B cell (primary cell): ENCODE measurements at regions of chr12 and their contacts with region 1.

Region 1: GRCh38 chr12:106357549-106358395 is at the start of gene POLR3B:
- DNase-seq: peak; percentile 98
- ATAC-seq: peak; percentile 90
- H3K4me3 ChIP-seq: peak within 1 kb of the TSS; percentile 59 to 93 (median 85)
- H3K4me3 Mint-ChIP-seq: peak within 1 kb of the TSS; percentile 98
- H3K27ac ChIP-seq: peak within 1 kb of the TSS; percentile 67 to 80
- H3K27ac Mint-ChIP-seq: peak within 1 kb of the TSS; percentile 97
- H3K4me1 ChIP-seq: peaks cover 11 to 12% of the 10 kb centered on the region in 2 donors
- H3K4me1 Mint-ChIP-seq: peaks cover 16% of the 10 kb centered on the region
- H3K27me3 ChIP-seq: no peaks in the 10 kb centered on the region
- H3K27me3 Mint-ChIP-seq: peaks cover 2% of the 10 kb centered on the region
- CTCF ChIP-seq: peak; percentile 84
- total RNA-seq, gene POLR3B: 5.9 and 9.7 TPM in 2 replicates

Region 2: GRCh38 chr12:106247674-106248311 is 110.0 kb before region 1 on chr12 and contains the start of gene CKAP4:
- CTCF ChIA-PET with region 1: interaction called, 8 read pairs
- POLR2A ChIA-PET with region 1: interaction called, 3 read pairs
- intact Hi-C with region 1: loop called (anchors 1 kb)
- DNase-seq: peak; percentile 80
- ATAC-seq: peak; percentile 61
- H3K4me3 ChIP-seq: peak within 1 kb of the TSS; percentile 53 to 77 (median 71)
- H3K4me3 Mint-ChIP-seq: peak within 1 kb of the TSS; percentile 85
- H3K27ac ChIP-seq: peak within 1 kb of the TSS; percentile 73 to 85
- H3K27ac Mint-ChIP-seq: peak within 1 kb of the TSS; percentile 88
- H3K4me1 ChIP-seq: peaks cover 36 to 52% of the 10 kb centered on the region in 2 donors
- H3K4me1 Mint-ChIP-seq: peaks cover 58% of the 10 kb centered on the region
- H3K27me3 ChIP-seq: peaks cover 0 to 16% (median 4%) of the 10 kb centered on the region in 4 experiments
- H3K27me3 Mint-ChIP-seq: no peaks in the 10 kb centered on the region
- CTCF ChIP-seq: no peak
- total RNA-seq, gene CKAP4: 27.3 and 29.2 TPM in 2 replicates

Region 3: DNA sequence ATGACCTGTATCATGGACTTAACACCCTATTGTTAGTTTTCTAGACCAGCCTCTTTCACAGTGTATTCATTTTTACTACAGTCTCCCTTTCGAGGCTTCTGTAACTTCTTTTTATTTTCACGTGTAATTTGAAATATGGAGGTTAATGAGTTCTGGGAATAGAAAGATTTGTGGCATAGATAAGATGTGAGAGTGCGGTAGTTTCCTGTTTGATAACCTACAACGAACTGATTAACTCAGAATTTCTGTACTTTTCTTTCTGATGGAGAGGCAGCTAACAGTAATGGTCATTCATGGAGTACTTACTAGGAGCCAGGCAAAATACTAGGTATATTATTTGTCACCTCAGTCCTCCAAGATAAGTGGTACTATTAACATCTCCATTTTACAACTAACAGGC is 21.0 kb after region 1 on chr12:
- CTCF ChIA-PET with region 1: interaction called, 22 read pairs
- POLR2A ChIA-PET with region 1: no interaction called
- intact Hi-C with region 1: no loop called
- DNase-seq: no peak
- ATAC-seq: no peak
- H3K4me3 ChIP-seq: no peak overlapping the region
- H3K4me3 Mint-ChIP-seq: no peak overlapping the region
- H3K27ac ChIP-seq: no peak overlapping the region
- H3K27ac Mint-ChIP-seq: no peak overlapping the region
- H3K4me1 ChIP-seq: no peaks in the 10 kb centered on the region
- H3K4me1 Mint-ChIP-seq: no peaks in the 10 kb centered on the region
- H3K27me3 ChIP-seq: no peaks in the 10 kb centered on the region
- H3K27me3 Mint-ChIP-seq: no peaks in the 10 kb centered on the region
- CTCF ChIP-seq: no peak

Region 4: GRCh38 chr12:106841510-106842302 is 483.9 kb after region 1 on chr12:
- CTCF ChIA-PET with region 1: interaction called, 17 read pairs
- POLR2A ChIA-PET with region 1: no interaction called
- intact Hi-C with region 1: no loop called
- DNase-seq: peak; percentile 52
- ATAC-seq: no peak
- H3K4me3 ChIP-seq: no peak overlapping the region
- H3K4me3 Mint-ChIP-seq: no peak overlapping the region
- H3K27ac ChIP-seq: no peak overlapping the region
- H3K27ac Mint-ChIP-seq: no peak overlapping the region
- H3K4me1 ChIP-seq: no peaks in the 10 kb centered on the region
- H3K4me1 Mint-ChIP-seq: no peaks in the 10 kb centered on the region
- H3K27me3 ChIP-seq: no peaks in the 10 kb centered on the region
- H3K27me3 Mint-ChIP-seq: no peaks in the 10 kb centered on the region
- CTCF ChIP-seq: peak; percentile 70

Region 5: GRCh38 chr12:106955377-106956047 is 597.7 kb after region 1 on chr12 and contains the start of gene TMEM263:
- CTCF ChIA-PET with region 1: interaction called, 6 read pairs
- POLR2A ChIA-PET with region 1: no interaction called
- intact Hi-C with region 1: loop called (anchors 1 kb)
- DNase-seq: peak; percentile 94
- ATAC-seq: peak; percentile 84
- H3K4me3 ChIP-seq: peak within 1 kb of the TSS; percentile 67 to 89 (median 88)
- H3K4me3 Mint-ChIP-seq: peak within 1 kb of the TSS; percentile 99
- H3K27ac ChIP-seq: peak within 1 kb of the TSS; percentile 49 to 57
- H3K27ac Mint-ChIP-seq: peak within 1 kb of the TSS; percentile 93
- H3K4me1 ChIP-seq: peaks cover 9 to 12% of the 10 kb centered on the region in 2 donors
- H3K4me1 Mint-ChIP-seq: peaks cover 20% of the 10 kb centered on the region
- H3K27me3 ChIP-seq: no peaks in the 10 kb centered on the region
- H3K27me3 Mint-ChIP-seq: no peaks in the 10 kb centered on the region
- CTCF ChIP-seq: no peak
- total RNA-seq, gene TMEM263: 23.5 and 26.7 TPM in 2 replicates